ENCODE measurements at regions of chr5 and their contacts with region 1.

Region 1: DNA sequence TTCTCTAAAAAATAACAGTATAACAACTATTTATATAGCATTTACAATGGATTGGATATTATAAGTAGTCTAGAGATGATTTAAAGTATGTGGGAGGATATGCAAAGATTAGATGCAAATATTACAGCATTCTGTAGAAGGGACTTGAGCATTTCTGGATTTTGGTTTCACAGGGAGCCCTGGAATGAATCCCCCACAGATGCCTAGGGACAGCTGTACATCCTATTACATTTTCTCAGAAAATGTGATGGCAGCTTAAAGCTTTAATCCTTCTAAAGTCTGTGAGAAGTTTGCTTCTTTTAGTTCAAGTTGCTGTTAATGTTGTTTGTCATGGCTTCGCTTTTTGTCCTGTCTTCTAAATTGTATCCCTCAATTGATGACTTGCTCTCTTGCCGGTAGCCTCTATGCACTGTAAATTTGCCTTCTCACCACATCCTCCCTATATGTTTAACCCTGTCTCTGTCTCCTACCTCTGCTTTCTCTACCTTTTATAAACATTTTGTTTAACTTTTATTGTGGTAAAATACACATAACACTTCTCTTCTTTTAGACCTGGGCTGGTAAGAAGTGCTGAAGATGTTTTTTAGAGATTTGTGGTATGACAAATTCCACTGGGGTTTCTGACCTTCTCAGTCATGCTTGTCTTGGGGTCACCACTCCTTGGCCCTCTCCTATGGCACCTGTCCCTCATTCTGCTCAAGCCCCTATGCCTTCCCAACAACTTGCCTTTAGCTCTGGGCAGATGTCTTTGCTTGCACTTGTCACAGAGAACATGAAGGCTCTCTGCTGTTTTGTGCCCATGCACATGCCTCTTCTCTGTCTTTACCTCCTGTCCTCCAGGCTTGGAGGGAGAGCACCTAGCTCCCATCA is 37.9 kb downstream of the LNPEP start:
- DNase-seq: no peak
- ATAC-seq: no peak
- H3K4me3 ChIP-seq: no peak overlapping the region
- H3K4me3 Mint-ChIP-seq: peak overlapping the region; percentile 18
- H3K27ac ChIP-seq: peak overlapping the region in 1 of 2 donors; percentile 30
- H3K27ac Mint-ChIP-seq: peak overlapping the region; percentile 12
- H3K4me1 ChIP-seq: peaks cover 30 to 46% of the 10 kb centered on the region in 2 donors
- H3K4me1 Mint-ChIP-seq: peaks cover 70% of the 10 kb centered on the region
- H3K27me3 ChIP-seq: no peaks in the 10 kb centered on the region
- H3K27me3 Mint-ChIP-seq: no peaks in the 10 kb centered on the region
- CTCF ChIP-seq: no peak

Region 2: DNA sequence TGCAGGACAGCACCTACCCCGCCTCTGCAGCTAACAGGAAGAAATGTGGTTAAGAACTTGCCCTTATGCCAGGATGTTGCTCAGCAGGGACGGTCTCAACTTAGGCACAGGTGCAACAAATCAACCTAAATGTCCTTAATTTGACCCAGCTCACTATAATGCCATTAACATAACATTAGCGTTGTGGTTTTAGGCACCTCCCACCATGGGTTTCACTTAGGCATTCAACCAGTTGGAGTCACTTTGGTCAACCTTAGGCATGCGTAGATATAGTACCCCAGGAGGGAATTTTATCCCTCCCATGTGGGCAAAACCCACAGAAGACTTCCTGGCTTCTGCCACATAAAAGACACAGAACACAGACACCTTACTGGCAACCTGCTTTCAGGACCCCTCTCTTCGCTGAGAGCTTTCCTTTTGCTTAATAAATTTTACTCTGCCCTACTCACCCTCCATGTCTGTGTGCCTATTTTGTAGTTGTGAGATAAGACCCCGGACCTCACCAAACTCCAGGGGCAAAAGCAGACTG is 157.3 kb before region 1 on chr5:
- CTCF ChIA-PET with region 1: no interaction called
- POLR2A ChIA-PET with region 1: no interaction called
- intact Hi-C with region 1: no loop called
- DNase-seq: peak; percentile 65
- ATAC-seq: peak; percentile 79
- H3K4me3 ChIP-seq: peak overlapping the region; percentile 8 to 65 (median 48)
- H3K4me3 Mint-ChIP-seq: peak overlapping the region; percentile 88
- H3K27ac ChIP-seq: peak overlapping the region; percentile 67 to 71
- H3K27ac Mint-ChIP-seq: peak overlapping the region; percentile 76
- H3K4me1 ChIP-seq: peaks cover 21 to 23% of the 10 kb centered on the region in 2 donors
- H3K4me1 Mint-ChIP-seq: peaks cover 22% of the 10 kb centered on the region
- H3K27me3 ChIP-seq: no peaks in the 10 kb centered on the region
- H3K27me3 Mint-ChIP-seq: no peaks in the 10 kb centered on the region
- CTCF ChIP-seq: no peak

Region 3: DNA sequence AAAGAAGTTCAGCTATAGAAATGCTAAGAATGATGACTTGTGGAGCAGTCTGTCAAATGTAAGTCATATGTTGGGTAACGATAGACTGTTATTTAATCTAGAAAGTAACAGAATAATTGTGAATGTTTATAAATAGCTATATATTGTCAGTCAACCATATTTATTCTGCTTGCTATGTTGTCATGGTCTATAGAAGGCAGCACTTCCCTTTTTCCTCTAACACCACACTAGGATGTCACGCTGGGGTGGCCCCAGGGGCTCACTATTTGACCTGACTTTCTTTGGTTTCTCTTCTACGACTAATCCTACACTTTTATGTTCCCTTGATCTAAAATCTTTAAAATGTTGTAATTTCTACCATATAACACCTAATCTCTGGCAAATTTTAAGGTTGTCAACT is 77.0 kb before region 1 on chr5:
- CTCF ChIA-PET with region 1: no interaction called
- POLR2A ChIA-PET with region 1: no interaction called
- intact Hi-C with region 1: no loop called
- DNase-seq: peak; percentile 86
- ATAC-seq: peak; percentile 97
- H3K4me3 ChIP-seq: peak overlapping the region; percentile 24 to 65 (median 45)
- H3K4me3 Mint-ChIP-seq: peak overlapping the region; percentile 80
- H3K27ac ChIP-seq: peak overlapping the region; percentile 96 to 98
- H3K27ac Mint-ChIP-seq: peak overlapping the region; percentile 85
- H3K4me1 ChIP-seq: peaks cover 16 to 18% of the 10 kb centered on the region in 2 donors
- H3K4me1 Mint-ChIP-seq: peaks cover 32% of the 10 kb centered on the region
- H3K27me3 ChIP-seq: no peaks in the 10 kb centered on the region
- H3K27me3 Mint-ChIP-seq: no peaks in the 10 kb centered on the region
- CTCF ChIP-seq: no peak

Region 4: GRCh38 chr5:96963267-96963666 is 10.5 kb before region 1 on chr5:
- CTCF ChIA-PET with region 1: no interaction called
- POLR2A ChIA-PET with region 1: interaction called, 3 read pairs
- intact Hi-C with region 1: loop called (anchors 2 kb)
- DNase-seq: peak; percentile 31
- ATAC-seq: peak; percentile 50
- H3K4me3 ChIP-seq: no peak overlapping the region
- H3K4me3 Mint-ChIP-seq: peak overlapping the region; percentile 60
- H3K27ac ChIP-seq: peak overlapping the region in 1 of 2 donors; percentile 86
- H3K27ac Mint-ChIP-seq: peak overlapping the region; percentile 63
- H3K4me1 ChIP-seq: peaks cover 41 to 60% of the 10 kb centered on the region in 2 donors
- H3K4me1 Mint-ChIP-seq: peaks cover 76% of the 10 kb centered on the region
- H3K27me3 ChIP-seq: no peaks in the 10 kb centered on the region
- H3K27me3 Mint-ChIP-seq: no peaks in the 10 kb centered on the region
- CTCF ChIP-seq: no peak

Region 5: DNA sequence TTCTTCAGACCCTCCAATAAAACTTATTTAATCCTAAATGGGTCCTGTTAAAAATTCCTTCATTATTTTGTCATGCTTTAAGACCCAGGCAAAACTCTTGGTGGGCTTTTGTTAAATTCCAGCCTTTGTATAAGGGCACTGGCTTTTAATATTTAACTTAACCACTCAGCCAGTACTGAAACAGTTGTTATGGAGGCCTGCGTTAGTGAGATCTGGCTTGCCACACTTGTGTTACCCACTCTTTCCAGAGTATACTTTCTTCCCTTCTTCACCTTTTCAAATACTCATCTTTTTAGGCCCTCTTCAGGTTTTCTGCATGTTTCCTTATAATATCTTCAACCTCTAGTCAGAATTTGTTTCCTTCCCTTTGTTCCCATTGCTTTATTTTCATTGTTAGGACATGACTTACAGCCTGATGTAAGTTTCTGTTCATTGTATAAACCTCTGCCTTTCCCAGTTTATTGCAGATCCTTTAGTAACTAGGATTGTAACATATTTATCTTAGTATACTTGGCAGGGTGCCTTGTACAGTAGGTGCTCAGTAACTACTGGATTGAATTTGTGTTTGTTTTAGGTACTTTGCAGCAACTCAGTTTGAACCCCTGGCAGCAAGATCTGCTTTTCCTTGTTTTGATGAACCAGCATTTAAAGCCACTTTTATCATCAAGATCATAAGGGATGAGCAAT is 10.9 kb after region 1 on chr5:
- CTCF ChIA-PET with region 1: interaction called, 3 read pairs
- POLR2A ChIA-PET with region 1: no interaction called
- intact Hi-C with region 1: loop called (anchors 2 kb)
- DNase-seq: no peak
- ATAC-seq: no peak
- H3K4me3 ChIP-seq: no peak overlapping the region
- H3K4me3 Mint-ChIP-seq: no peak overlapping the region
- H3K27ac ChIP-seq: no peak overlapping the region
- H3K27ac Mint-ChIP-seq: no peak overlapping the region
- H3K4me1 ChIP-seq: no peaks in the 10 kb centered on the region
- H3K4me1 Mint-ChIP-seq: peaks cover 15% of the 10 kb centered on the region
- H3K27me3 ChIP-seq: no peaks in the 10 kb centered on the region
- H3K27me3 Mint-ChIP-seq: no peaks in the 10 kb centered on the region
- CTCF ChIP-seq: no peak

Measured in B cell (primary cell).